B cell (primary cell): ENCODE measurements at regions of chr11 and their contacts with region 1.

Region 1: GRCh38 chr11:67583247-67584204 is at the start of gene GSTP1:
- DNase-seq: peak; percentile 86
- ATAC-seq: peak; percentile 71
- H3K4me3 ChIP-seq: peak within 1 kb of the TSS; percentile 34 to 69 (median 58)
- H3K4me3 Mint-ChIP-seq: peak within 1 kb of the TSS; percentile 93
- H3K27ac ChIP-seq: peak within 1 kb of the TSS; percentile 51 to 91
- H3K27ac Mint-ChIP-seq: peak within 1 kb of the TSS; percentile 100
- H3K4me1 ChIP-seq: peaks cover 67 to 73% of the 10 kb centered on the region in 2 donors
- H3K4me1 Mint-ChIP-seq: peaks cover 68% of the 10 kb centered on the region
- H3K27me3 ChIP-seq: peaks cover 0 to 4% (median 2%) of the 10 kb centered on the region in 4 experiments
- H3K27me3 Mint-ChIP-seq: peaks cover 5% of the 10 kb centered on the region
- CTCF ChIP-seq: peak; percentile 71
- total RNA-seq, gene GSTP1: 296 and 313 TPM in 2 replicates

Region 2: GRCh38 chr11:67606492-67607201 is 23.1 kb after region 1 on chr11 and contains the start of gene NDUFV1:
- CTCF ChIA-PET with region 1: interaction called, 13 read pairs
- POLR2A ChIA-PET with region 1: interaction called, 6 read pairs
- intact Hi-C with region 1: loop called (anchors 1 kb)
- DNase-seq: peak; percentile 97
- ATAC-seq: peak; percentile 99
- H3K4me3 ChIP-seq: peak within 1 kb of the TSS; percentile 70 to 90 (median 88)
- H3K4me3 Mint-ChIP-seq: peak within 1 kb of the TSS; percentile 95
- H3K27ac ChIP-seq: peak within 1 kb of the TSS; percentile 43 to 72
- H3K27ac Mint-ChIP-seq: peak within 1 kb of the TSS; percentile 90
- H3K4me1 ChIP-seq: peaks cover 13 to 17% of the 10 kb centered on the region in 2 donors
- H3K4me1 Mint-ChIP-seq: peaks cover 20% of the 10 kb centered on the region
- H3K27me3 ChIP-seq: peaks cover 0 to 16% (median 5%) of the 10 kb centered on the region in 4 experiments
- H3K27me3 Mint-ChIP-seq: peaks cover 18% of the 10 kb centered on the region
- CTCF ChIP-seq: peak; percentile 82
- total RNA-seq, gene NDUFV1: 232 and 238 TPM in 2 replicates

Region 3: GRCh38 chr11:67613960-67614715 is 30.6 kb after region 1 on chr11:
- CTCF ChIA-PET with region 1: interaction called, 25 read pairs
- POLR2A ChIA-PET with region 1: interaction called, 6 read pairs
- intact Hi-C with region 1: loop called (anchors 1 kb)
- DNase-seq: peak; percentile 97
- ATAC-seq: peak; percentile 95
- H3K4me3 ChIP-seq: peak overlapping the region in 4 of 5 experiments; percentile 38 to 58 (median 50)
- H3K4me3 Mint-ChIP-seq: peak overlapping the region; percentile 83
- H3K27ac ChIP-seq: peak overlapping the region; percentile 97 to 98
- H3K27ac Mint-ChIP-seq: peak overlapping the region; percentile 99
- H3K4me1 ChIP-seq: peaks cover 32 to 38% of the 10 kb centered on the region in 2 donors
- H3K4me1 Mint-ChIP-seq: peaks cover 45% of the 10 kb centered on the region
- H3K27me3 ChIP-seq: no peaks in the 10 kb centered on the region
- H3K27me3 Mint-ChIP-seq: no peaks in the 10 kb centered on the region
- CTCF ChIP-seq: peak; percentile 40

Region 4: DNA sequence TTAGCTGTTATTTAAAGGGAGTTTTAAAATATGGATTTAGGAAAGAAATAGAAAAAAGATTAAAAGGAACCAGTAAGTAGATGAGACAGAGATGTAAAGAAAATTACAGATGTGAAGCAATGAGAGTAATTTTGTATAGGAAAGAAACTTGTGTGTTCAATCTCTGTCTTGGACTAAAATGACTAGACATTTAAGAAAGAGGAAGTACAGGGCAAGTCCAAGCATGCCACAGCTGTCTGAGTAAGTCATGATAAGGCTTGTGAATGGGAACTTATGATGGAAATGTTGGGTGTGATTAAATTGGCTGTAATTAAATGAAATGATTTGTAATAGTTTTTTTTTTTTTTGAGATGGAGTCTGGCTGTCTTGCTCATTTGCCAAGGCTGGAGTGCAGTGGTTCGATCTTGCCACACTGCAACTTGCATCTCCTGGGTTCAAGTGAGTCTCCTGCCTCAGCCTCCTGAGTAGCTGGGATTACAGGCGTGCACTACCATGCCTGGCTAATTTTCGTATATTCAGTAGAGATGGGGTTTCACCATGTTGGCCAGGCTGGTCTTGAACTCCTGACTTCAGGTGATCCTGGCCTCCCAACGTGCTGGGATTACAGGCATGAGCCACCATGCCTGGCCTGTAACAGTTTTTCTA is 72.9 kb after region 1 on chr11:
- CTCF ChIA-PET with region 1: interaction called, 5 read pairs
- POLR2A ChIA-PET with region 1: no interaction called
- intact Hi-C with region 1: loop called (anchors 1 kb)
- DNase-seq: peak; percentile 37
- ATAC-seq: no peak
- H3K4me3 ChIP-seq: no peak overlapping the region
- H3K4me3 Mint-ChIP-seq: no peak overlapping the region
- H3K27ac ChIP-seq: no peak overlapping the region
- H3K27ac Mint-ChIP-seq: no peak overlapping the region
- H3K4me1 ChIP-seq: peaks cover 8 to 11% of the 10 kb centered on the region in 2 donors
- H3K4me1 Mint-ChIP-seq: peaks cover 11% of the 10 kb centered on the region
- H3K27me3 ChIP-seq: no peaks in the 10 kb centered on the region
- H3K27me3 Mint-ChIP-seq: no peaks in the 10 kb centered on the region
- CTCF ChIP-seq: no peak

Region 5: DNA sequence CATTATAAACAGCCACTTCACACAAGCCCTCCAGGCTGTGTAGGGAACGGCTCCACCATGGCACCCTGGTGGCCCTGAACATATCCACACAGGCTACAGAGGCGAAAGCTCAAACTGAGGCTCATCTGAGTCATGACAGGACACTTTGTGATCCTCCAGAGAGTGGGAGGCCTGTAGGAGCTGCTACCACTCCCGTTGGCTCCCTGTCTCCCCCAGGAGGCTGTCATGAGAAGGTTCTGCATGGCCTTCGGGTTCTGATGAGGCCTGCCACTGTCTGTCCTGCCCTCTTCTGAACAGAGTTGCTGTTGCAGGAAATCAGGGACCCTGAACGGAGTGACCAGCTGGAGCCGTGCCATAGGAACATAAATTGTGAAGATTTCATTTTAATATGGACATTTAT is 114.7 kb after region 1 on chr11:
- CTCF ChIA-PET with region 1: no interaction called
- POLR2A ChIA-PET with region 1: no interaction called
- intact Hi-C with region 1: no loop called
- DNase-seq: no peak
- ATAC-seq: no peak
- H3K4me3 ChIP-seq: no peak overlapping the region
- H3K4me3 Mint-ChIP-seq: no peak overlapping the region
- H3K27ac ChIP-seq: no peak overlapping the region
- H3K27ac Mint-ChIP-seq: no peak overlapping the region
- H3K4me1 ChIP-seq: no peaks in the 10 kb centered on the region
- H3K4me1 Mint-ChIP-seq: no peaks in the 10 kb centered on the region
- H3K27me3 ChIP-seq: peaks cover 0 to 4% (median 0%) of the 10 kb centered on the region in 4 experiments
- H3K27me3 Mint-ChIP-seq: peaks cover 26% of the 10 kb centered on the region
- CTCF ChIP-seq: no peak